Ascending aorta (tissue), 2 donors: ENCODE measurements at regions of chr4 and their contacts with region 1.

Region 1: DNA sequence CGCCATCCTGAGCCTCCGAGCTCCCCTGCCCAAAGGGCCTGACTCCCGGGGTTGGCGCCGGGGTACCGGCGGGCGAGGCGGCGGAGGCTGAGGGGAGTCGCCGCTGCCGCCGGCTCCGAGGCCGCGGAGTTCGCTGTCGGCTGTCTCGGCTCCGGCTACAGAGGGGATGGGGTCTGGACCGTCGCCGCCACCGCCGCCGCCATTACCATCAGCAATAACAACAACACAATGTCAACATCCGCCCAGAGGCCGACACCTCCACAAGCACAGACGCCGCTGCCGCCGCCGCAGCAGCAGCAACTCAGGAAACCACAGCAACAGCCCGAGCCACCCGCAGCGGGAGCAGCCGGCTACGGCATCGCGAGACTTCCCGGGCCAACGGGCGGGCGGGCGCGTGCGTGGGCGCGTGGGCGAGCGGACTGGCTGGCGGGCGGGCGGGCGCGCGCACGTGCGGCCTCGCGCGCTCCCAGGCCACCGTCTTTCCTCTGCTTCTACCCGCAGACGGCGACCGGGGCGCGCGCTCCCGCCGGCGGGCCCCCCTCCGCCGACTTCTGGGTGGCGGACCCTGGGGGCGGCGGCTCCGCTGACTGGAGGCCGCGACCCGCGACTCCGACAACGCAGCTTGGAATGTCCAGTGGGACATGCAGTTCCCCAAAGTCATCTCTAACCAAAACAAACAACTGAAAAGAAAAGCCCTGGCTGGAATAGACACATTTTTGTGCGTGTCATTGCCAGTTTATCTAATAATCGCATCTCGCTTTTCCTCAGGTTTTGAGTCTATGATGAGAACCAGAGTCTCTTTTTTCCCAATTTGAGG is at the start of gene CHIC2:
- DNase-seq: peak; percentile 83 to 97
- H3K4me3 ChIP-seq: peak within 1 kb of the TSS; percentile 90 to 99
- H3K27ac ChIP-seq: peak within 1 kb of the TSS; percentile 94 to 96
- H3K4me1 ChIP-seq: peaks cover 0 to 36% of the 10 kb centered on the region in 2 donors
- H3K27me3 ChIP-seq: no peaks in the 10 kb centered on the region
- CTCF ChIP-seq: no peak
- total RNA-seq, gene CHIC2: 34.1 TPM

Region 2: GRCh38 chr4:53365486-53366300 is 698.8 kb before region 1 on chr4 and contains the start of gene SCFD2:
- intact Hi-C with region 1: loop called (anchors 10 kb)
- DNase-seq: peak; percentile 95 to 99
- H3K4me3 ChIP-seq: peak within 1 kb of the TSS; percentile 69 to 97
- H3K27ac ChIP-seq: peak within 1 kb of the TSS; percentile 30 to 53
- H3K4me1 ChIP-seq: peaks cover 4 to 25% of the 10 kb centered on the region in 2 donors
- H3K27me3 ChIP-seq: no peaks in the 10 kb centered on the region
- CTCF ChIP-seq: no peak
- total RNA-seq, gene SCFD2: 22.8 TPM

Region 3: GRCh38 chr4:53861856-53862610 is 202.5 kb before region 1 on chr4:
- intact Hi-C with region 1: no loop called
- DNase-seq: no peak
- H3K4me3 ChIP-seq: no peak overlapping the region
- H3K27ac ChIP-seq: no peak overlapping the region
- H3K4me1 ChIP-seq: no peaks in the 10 kb centered on the region
- H3K27me3 ChIP-seq: no peaks in the 10 kb centered on the region
- CTCF ChIP-seq: no peak

Region 4: GRCh38 chr4:53929955-53930798 is 134.3 kb before region 1 on chr4:
- intact Hi-C with region 1: loop called (anchors 2 kb)
- DNase-seq: peak; percentile 23 to 90
- H3K4me3 ChIP-seq: no peak overlapping the region
- H3K27ac ChIP-seq: no peak overlapping the region
- H3K4me1 ChIP-seq: peaks cover 0 to 11% of the 10 kb centered on the region in 2 donors
- H3K27me3 ChIP-seq: no peaks in the 10 kb centered on the region
- CTCF ChIP-seq: peak; percentile 62 to 86 (median 62)

Region 5: DNA sequence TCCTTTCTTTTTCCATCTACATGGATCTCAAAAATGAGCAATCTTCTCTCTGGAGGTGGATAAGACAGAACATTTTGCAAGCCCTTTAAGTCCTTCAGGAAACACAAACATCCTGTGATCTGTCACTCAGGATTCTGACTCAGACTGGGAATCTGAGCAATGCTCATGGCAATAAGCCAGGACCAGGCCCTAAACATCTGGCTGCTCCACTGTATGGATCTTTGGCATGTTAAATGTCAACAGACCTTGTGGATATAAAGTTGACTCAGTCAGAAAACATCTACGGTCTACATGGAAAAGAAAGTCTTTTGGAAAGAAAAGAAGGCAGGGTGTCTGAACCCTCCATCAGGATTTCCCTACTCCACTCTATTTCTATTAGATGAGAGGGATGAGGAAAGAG is 17.7 kb after region 1 on chr4:
- intact Hi-C with region 1: loop called (anchors 1 kb)
- DNase-seq: peak in 1 of 2 donors; percentile 78
- H3K4me3 ChIP-seq: no peak overlapping the region
- H3K27ac ChIP-seq: peak overlapping the region in 1 of 2 donors; percentile 35
- H3K4me1 ChIP-seq: peaks cover 0 to 9% of the 10 kb centered on the region in 2 donors
- H3K27me3 ChIP-seq: no peaks in the 10 kb centered on the region
- CTCF ChIP-seq: no peak

Region 6: DNA sequence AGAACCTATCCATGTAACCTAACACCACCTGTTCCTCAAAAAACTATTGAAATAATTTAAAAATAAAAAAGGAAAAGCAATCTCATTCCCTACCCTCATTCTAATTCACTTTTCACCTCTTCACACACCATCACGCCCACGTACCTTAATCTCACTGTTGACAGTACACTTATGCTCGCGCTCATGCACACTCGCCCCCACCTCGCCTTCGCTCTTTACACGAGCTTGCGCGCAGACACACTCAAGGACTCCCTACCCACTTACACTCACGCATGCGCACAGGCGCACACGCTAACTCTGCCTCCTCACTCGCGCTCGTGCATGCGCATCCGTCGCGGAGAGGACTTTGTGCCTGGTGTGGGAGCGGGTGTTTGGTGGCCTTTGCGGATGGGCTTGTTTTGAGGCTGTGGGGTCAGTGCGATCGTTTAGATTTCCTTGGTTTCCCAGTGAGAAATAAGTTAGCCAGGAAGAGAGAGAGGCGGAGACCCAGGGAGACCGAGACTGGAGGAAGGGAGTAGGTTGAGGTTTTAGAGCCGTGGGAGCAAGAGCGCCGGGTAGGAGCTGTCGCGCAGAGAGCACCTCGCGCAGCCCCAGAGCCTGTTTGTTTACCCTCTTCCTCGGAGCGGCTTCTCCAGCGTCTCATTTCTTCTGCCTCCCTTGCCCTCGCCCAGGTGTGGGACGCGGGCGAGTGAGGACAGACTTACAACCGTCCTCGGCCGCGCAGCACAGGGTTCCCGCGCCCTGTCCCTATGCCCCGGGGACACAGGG is 27.3 kb after region 1 on chr4:
- intact Hi-C with region 1: loop called (anchors 1 kb)
- DNase-seq: peak in 1 of 2 donors; percentile 88
- H3K4me3 ChIP-seq: peak overlapping the region; percentile 59 to 82
- H3K27ac ChIP-seq: peak overlapping the region in 1 of 2 donors; percentile 26
- H3K4me1 ChIP-seq: peaks cover 3 to 9% of the 10 kb centered on the region in 2 donors
- H3K27me3 ChIP-seq: no peaks in the 10 kb centered on the region
- CTCF ChIP-seq: no peak

Region 7: GRCh38 chr4:54165438-54165837 is 100.9 kb after region 1 on chr4:
- intact Hi-C with region 1: loop called (anchors 5 kb)
- DNase-seq: no peak
- H3K4me3 ChIP-seq: no peak overlapping the region
- H3K27ac ChIP-seq: peak overlapping the region in 1 of 2 donors; percentile 1
- H3K4me1 ChIP-seq: peaks cover 0 to 9% of the 10 kb centered on the region in 2 donors
- H3K27me3 ChIP-seq: no peaks in the 10 kb centered on the region
- CTCF ChIP-seq: no peak

Region 8: DNA sequence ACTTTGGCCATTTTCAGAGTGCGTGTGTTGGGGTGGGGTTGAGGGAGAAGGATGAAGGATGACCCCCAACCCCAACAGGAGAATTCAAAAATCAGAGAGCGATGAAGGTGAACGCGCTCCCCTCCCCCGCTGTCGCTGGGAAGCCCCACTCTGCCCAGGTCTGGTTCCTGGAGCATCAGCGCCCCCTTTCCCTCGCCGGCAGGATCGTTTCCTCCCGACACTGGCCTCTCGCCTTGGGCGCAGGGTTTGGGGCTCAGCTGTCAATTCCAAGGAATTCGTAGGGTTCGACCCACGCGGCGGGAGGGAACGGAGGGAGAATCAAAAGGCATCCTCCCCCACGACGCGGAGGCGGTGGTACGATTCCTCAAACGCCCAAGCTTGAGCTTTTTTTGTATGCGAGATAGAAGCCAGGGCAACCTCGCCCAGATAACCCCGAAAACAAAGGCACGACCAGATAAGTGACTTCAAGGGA is 163.6 kb after region 1 on chr4:
- intact Hi-C with region 1: loop called (anchors 2 kb)
- DNase-seq: peak in 1 of 2 donors; percentile 86
- H3K4me3 ChIP-seq: peak overlapping the region; percentile 71 to 81
- H3K27ac ChIP-seq: peak overlapping the region; percentile 87 to 93
- H3K4me1 ChIP-seq: peaks cover 7 to 15% of the 10 kb centered on the region in 2 donors
- H3K27me3 ChIP-seq: no peaks in the 10 kb centered on the region
- CTCF ChIP-seq: peak; percentile 62 to 90 (median 78)